ENCODE measurements at regions of chr3 and their contacts with region 1.

Region 1: GRCh38 chr3:12706504-12707253 is 42.8 kb upstream of the RAF1 start:
- ATAC-seq: peak; percentile 49 to 99 (median 80)
- H3K4me3 ChIP-seq: no peak overlapping the region
- H3K27ac ChIP-seq: no peak overlapping the region
- H3K4me1 ChIP-seq: peaks cover 0 to 6% of the 10 kb centered on the region in 2 donors

Region 2: GRCh38 chr3:12444582-12445468 is 261.9 kb before region 1 on chr3:
- in situ Hi-C with region 1: no loop called
- ATAC-seq: peak in 2 of 8 experiments; percentile 33 to 49
- H3K4me3 ChIP-seq: no peak overlapping the region
- H3K27ac ChIP-seq: no peak overlapping the region
- H3K4me1 ChIP-seq: no peaks in the 10 kb centered on the region

Region 3: DNA sequence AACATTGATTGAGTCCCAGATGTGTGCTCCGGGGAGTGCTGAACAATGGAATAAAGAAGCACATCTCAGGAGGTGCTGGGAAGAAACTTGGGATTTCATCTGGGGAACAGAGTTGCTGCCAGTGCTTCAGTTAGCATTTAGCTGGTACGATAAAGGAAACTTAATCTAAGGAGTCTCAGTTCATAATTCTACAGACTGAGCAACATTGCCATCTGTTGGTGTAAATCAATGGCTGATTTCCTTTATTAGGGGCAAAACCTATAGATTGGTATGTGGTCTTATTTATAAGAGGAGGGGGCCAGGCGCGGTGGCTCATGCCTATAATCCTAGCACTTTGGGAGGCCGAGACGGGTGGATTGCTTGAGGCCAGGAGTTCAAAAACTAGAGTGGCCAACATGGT is 170.3 kb before region 1 on chr3:
- in situ Hi-C with region 1: no loop called
- ATAC-seq: no peak
- H3K4me3 ChIP-seq: no peak overlapping the region
- H3K27ac ChIP-seq: no peak overlapping the region
- H3K4me1 ChIP-seq: no peaks in the 10 kb centered on the region

Region 4: DNA sequence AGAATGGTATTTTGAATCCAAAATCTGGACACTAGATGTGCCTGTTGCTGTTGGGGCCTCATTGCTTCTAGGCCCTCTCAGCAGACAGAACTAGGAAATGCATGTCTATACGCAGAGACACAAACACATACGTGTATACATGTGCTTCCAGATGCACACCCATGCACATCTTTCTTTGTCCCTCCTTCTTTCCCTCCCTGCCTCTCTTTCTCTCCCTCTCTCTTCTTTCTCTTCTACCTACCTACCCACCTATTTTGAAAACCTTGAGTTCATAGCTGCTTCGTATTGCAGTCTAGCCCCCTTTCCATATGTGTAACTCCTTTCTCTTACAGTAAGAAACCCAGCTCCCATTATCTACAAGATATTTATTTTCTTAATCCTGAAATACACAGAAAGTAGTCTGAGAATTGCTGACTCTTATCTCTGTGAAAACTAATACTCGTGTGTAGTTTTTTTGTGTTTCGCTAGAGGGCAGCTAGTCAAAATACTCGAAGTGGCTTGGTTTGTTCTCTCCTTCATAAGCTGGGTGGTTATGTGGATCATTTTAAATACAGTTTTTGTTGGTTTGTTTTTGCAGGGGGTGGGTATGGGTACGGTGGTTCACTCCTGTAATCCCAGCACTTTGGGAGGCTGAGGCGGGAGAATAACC is 116.2 kb after region 1 on chr3:
- in situ Hi-C with region 1: loop called in 1 of 9 experiments (anchors 10 kb)
- ATAC-seq: peak in 2 of 8 experiments; percentile 26 to 66
- H3K4me3 ChIP-seq: no peak overlapping the region
- H3K27ac ChIP-seq: no peak overlapping the region
- H3K4me1 ChIP-seq: no peaks in the 10 kb centered on the region